ENCODE measurements at regions of chr19 and their contacts with region 1.

Region 1: DNA sequence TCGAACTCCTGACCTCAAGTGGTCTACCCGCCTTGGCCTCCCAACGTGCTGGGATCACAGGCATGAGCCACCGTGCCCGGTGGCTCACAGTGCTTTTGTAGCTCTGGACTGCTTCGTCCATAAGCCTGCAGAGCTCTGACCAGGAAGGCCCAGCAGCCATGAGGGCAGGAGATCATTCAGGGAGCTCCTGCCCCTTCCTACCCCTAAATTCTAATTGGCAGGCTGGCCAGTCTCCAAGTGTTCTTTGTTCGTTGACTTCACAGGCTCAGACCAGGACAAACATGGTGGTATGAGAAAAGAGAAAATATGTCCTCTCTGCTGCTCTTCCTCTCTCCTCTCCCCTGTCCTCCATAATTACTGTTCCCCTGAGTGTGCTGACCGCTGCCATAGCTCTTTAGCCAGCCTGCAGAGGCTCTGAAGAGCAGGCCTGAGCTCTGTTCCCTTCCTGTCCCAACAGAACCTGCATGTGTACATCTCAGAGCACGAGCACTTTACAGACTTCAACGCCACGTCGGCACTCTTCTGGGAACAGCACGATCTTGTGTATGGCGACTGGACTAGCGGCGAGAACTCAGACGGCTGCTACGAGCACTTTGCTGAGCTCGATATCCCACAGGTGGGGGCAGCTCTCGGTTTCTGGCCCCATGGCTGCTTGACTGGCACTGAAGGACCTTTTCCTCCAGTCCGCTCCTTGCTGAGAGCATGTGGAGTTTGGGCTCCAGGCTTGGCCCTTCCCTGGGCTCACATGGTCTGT is 19.0 kb downstream of the CLPTM1 start:
- DNase-seq: no peak
- H3K4me3 ChIP-seq: no peak overlapping the region
- H3K4me3 Mint-ChIP-seq: peak overlapping the region in 1 of 7 donors; percentile 29
- H3K27ac ChIP-seq: no peak overlapping the region
- H3K27ac Mint-ChIP-seq: no peak overlapping the region
- H3K4me1 ChIP-seq: no peaks in the 10 kb centered on the region
- H3K4me1 Mint-ChIP-seq: peaks cover 0 to 4% (median 0%) of the 10 kb centered on the region in 3 donors
- H3K27me3 ChIP-seq: no peaks in the 10 kb centered on the region
- H3K27me3 Mint-ChIP-seq: no peaks in the 10 kb centered on the region

Region 2: GRCh38 chr19:44954824-44955586 is 19.2 kb before region 1 on chr19 and contains the start of gene CLPTM1:
- CTCF ChIA-PET with region 1: interaction called, 3 read pairs
- POLR2A ChIA-PET with region 1: interaction called, 10 read pairs
- DNase-seq: peak; percentile 94 to 98 (median 95)
- H3K4me3 ChIP-seq: peak within 1 kb of the TSS; percentile 79
- H3K4me3 Mint-ChIP-seq: peak within 1 kb of the TSS; percentile 94 to 99 (median 97)
- H3K27ac ChIP-seq: peak within 1 kb of the TSS; percentile 92
- H3K27ac Mint-ChIP-seq: peak within 1 kb of the TSS; percentile 84 to 99 (median 97)
- H3K4me1 ChIP-seq: peaks cover 35% of the 10 kb centered on the region
- H3K4me1 Mint-ChIP-seq: peaks cover 50 to 62% (median 53%) of the 10 kb centered on the region in 3 donors
- H3K27me3 ChIP-seq: no peaks in the 10 kb centered on the region
- H3K27me3 Mint-ChIP-seq: peaks cover 0 to 6% of the 10 kb centered on the region in 2 donors
- total RNA-seq, gene CLPTM1: 78.6 to 82.5 TPM

Measured in CD8-positive, alpha-beta memory T cell (primary cell).